Calu3 (cell line): ENCODE measurements at regions of chr16 and their contacts with region 1.

Region 1: DNA sequence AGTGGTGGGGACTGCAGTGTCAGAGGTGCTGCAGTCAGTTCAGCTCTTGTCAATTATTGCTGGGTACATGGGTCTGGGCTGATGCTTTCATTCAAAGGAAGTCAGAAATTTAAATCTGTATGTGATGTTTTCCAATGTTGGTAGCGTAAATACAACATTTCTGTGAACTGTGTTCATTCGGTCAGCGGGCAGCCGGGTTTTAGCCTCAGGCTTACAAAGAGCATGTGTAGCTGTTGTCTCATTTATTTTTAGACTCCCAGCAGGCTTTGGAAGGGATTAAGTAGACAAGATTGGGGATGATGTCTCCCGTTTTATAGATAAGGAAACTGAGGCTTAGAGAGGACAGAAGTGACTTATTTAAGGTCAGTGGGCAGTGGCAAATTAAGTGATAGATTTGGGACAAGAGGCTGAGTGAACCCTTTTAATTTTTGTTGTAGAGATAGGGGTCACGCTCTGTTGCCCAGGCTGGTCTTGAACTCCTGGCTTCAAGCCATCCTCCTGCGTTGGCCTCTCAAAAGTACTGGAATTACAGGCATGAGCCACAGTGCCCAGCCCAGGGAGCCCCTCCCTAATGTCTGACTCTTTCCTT is 8.1 kb downstream of the AQP8 start:
- DNase-seq: no peak
- H3K4me3 Mint-ChIP-seq: no peak overlapping the region
- H3K27ac Mint-ChIP-seq: no peak overlapping the region
- H3K4me1 Mint-ChIP-seq: no peaks in the 10 kb centered on the region
- H3K27me3 Mint-ChIP-seq: no peaks in the 10 kb centered on the region
- CTCF ChIP-seq: no peak

Region 2: DNA sequence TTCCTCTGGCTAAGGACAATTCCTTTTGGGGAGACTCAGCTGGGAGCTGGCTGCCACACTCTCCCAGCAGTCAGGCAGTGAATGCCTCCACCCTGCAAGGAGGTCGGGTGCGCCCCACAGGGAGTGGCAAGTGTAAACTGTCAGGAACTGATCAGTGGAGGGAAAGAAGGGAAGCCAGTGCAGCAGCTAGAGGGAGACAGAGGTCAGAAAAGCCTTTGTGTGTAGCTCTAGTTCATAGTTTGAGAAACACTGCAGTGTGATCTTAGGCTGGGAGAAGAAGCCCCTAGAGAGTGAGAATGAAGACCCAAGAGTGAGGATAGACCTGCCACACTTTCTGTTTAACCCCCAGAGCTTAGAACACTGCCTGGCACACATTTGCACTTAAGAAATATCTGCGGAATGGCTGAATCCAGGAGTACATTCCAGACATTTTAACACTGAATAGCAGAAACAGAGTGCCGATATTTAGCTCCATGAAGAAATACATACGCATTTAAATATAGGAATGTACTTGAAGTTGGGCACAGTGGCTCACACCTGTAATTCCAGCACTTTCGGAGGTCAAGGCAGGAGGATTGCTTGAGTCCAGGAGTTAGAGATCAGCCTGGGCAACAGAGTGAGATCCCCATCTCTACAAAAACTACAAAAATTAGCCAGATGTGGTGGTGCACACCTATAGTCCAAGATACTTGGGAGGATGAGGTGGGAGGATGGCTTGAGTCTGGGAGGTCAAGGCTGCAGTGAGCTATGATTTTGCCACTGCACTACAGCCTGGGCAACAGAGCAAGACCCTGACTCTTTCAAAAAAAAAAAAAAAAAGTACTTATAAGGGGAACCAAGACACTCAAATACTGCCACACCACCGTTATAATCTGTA is 390.1 kb before region 1 on chr16:
- CTCF ChIA-PET with region 1: interaction called, 3 read pairs
- intact Hi-C with region 1: loop called (anchors 2 kb)
- DNase-seq: peak; percentile 67
- H3K4me3 Mint-ChIP-seq: no peak overlapping the region
- H3K27ac Mint-ChIP-seq: no peak overlapping the region
- H3K4me1 Mint-ChIP-seq: peaks cover 13% of the 10 kb centered on the region
- H3K27me3 Mint-ChIP-seq: no peaks in the 10 kb centered on the region
- CTCF ChIP-seq: peak; percentile 70

Region 3: GRCh38 chr16:25051406-25052150 is 173.2 kb before region 1 on chr16:
- CTCF ChIA-PET with region 1: interaction called, 6 read pairs
- intact Hi-C with region 1: loop called (anchors 1 kb)
- DNase-seq: peak; percentile 70
- H3K4me3 Mint-ChIP-seq: peak overlapping the region; percentile 50
- H3K27ac Mint-ChIP-seq: peak overlapping the region; percentile 99
- H3K4me1 Mint-ChIP-seq: peaks cover 46% of the 10 kb centered on the region
- H3K27me3 Mint-ChIP-seq: no peaks in the 10 kb centered on the region
- CTCF ChIP-seq: no peak

Region 4: GRCh38 chr16:25126820-25127232 is 98.0 kb before region 1 on chr16:
- CTCF ChIA-PET with region 1: interaction called, 15 read pairs
- intact Hi-C with region 1: loop called (anchors 2 kb)
- DNase-seq: peak; percentile 73
- H3K4me3 Mint-ChIP-seq: peak overlapping the region; percentile 13
- H3K27ac Mint-ChIP-seq: peak overlapping the region; percentile 60
- H3K4me1 Mint-ChIP-seq: peaks cover 42% of the 10 kb centered on the region
- H3K27me3 Mint-ChIP-seq: no peaks in the 10 kb centered on the region
- CTCF ChIP-seq: peak; percentile 48